Lower leg skin (tissue), 4 donors: ENCODE measurements at regions of chr2 and their contacts with region 1.

Region 1: DNA sequence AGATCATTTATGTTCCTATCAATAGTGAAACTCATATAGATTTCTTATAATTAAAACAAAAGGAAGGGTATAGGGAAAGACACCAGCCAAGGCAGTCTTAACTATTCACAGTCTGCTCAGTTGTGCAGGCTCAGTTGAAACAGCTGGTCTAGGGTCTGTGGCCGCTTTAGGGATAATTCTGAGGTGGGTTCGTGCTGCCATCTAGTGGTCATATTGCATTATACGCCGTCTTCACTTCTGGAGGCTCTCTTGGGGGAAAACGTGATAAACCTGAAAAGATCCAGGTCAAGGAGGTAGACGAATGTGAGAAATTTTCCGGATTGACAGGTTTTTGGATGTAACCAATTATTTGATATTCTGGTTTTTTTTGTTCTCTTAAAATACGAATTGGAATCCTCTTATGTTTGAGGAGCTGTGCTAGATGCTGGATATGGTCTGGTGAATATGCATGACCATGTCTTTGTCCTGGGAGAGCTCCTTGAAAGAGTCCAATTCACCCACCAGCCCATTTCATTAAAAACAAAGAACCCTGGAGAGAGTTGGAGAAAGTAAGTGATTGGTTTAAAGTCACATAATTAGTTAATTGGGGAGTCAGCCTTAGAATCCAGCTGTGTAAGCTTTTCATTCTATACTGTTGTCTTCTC is 492.4 kb downstream of the PLCL1 start:
- DNase-seq: peak in 1 of 2 donors; percentile 29
- H3K4me3 ChIP-seq: no peak overlapping the region
- CTCF ChIP-seq: peak in 1 of 3 donors; percentile 20
- POLR2A ChIP-seq: no peak

Region 2: GRCh38 chr2:197804049-197804757 is 492.6 kb before region 1 on chr2 and contains the start of gene PLCL1:
- intact Hi-C with region 1: loop called (anchors 2 kb)
- DNase-seq: peak; percentile 91 to 98
- H3K4me3 ChIP-seq: peak within 1 kb of the TSS; percentile 86
- CTCF ChIP-seq: no peak
- POLR2A ChIP-seq: no peak
- total RNA-seq, gene PLCL1: 1.0 to 3.7 (median 2.6) TPM

Region 3: DNA sequence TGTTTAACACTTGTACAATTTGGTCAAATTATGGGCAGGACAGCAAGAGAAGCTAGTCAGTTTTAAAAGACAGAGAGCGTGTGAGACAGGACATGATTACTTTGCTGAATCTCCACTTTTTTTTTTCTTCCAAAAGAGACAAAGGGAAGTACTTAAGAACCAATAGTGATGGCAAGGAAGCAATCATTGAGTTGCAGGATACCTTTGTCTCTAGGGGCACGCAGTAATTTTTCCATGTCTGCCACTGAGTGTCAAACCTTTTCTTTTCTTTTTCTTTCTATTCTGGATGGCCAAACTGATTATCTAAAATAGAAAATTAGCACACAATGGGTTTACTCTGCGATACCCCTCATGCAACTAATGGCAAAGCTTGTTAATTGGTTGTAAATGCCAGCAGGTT is 40.6 kb after region 1 on chr2:
- intact Hi-C with region 1: no loop called
- DNase-seq: no peak
- H3K4me3 ChIP-seq: no peak overlapping the region
- CTCF ChIP-seq: no peak
- POLR2A ChIP-seq: no peak

Region 4: DNA sequence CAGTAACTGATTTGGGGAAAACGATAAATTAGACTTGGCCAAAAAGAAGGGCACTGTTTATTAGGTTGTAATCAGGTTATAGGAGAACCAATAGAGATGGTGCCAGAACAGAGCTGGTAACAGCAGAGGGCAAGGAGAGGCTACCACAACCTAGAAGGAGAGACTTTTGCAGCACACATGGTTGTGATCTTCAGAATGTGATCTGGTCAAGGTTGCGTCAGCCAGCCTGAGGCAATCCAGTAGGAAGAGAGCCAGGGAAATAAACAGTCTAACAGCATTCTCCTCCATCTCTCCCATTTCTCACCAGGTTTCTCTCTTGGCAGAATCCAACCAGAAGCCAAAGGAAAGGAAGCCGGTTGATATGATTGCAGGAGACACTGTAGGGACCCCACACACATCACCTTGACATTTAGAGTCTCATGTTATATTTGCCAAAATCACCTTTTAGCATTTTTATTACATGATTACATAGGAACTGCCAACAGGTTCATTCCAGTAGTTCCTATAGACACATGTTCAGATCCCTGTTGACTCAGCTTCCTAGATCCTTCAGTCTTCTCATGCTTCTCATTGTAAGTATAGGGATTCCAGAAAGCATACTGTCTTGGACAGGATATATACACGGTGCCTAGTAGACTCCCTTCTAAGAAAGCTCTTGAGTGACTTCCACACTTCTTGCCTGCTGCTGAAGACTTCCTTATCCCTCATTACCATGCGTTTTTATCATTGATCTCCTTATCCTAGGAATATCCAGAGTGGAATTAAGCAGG is 1992.1 kb after region 1 on chr2:
- intact Hi-C with region 1: loop called (anchors 5 kb)
- DNase-seq: peak; percentile 29 to 85
- H3K4me3 ChIP-seq: no peak overlapping the region
- CTCF ChIP-seq: no peak
- POLR2A ChIP-seq: no peak